ENCODE measurements at regions of chr13 and their contacts with region 1.

Region 1: DNA sequence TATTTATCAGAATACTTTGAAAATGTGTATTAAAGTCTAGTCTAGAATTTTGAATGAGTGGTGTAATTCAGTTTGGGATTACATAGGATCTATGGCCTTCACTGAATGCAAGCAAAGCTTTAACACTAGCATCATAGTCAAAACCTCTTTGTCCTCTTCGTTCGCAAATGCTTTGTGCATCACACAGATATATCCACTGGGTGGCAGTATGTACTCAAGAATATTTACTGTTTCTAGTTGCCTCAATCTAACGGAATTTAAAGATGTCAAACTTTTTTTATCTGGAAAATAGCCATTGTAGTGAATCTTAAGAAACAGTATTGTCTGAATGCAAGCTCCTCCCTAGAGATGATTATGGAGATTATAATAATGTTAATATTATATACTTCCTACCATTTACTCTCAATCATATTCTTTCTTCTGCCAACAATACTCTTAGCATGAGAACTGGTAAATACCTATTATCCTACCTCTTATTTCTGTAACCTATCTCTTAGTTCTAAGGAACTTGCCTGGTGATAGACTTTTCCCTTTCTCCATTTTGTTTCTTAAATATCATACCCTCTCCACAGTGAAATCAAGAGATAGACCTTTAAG is 25.8 kb downstream of the LACC1 start:
- DNase-seq: peak; percentile 67
- H3K4me3 Mint-ChIP-seq: no peak overlapping the region
- H3K27ac Mint-ChIP-seq: no peak overlapping the region
- H3K4me1 Mint-ChIP-seq: peaks cover 8% of the 10 kb centered on the region
- H3K27me3 Mint-ChIP-seq: no peaks in the 10 kb centered on the region
- CTCF ChIP-seq: peak; percentile 70

Region 2: DNA sequence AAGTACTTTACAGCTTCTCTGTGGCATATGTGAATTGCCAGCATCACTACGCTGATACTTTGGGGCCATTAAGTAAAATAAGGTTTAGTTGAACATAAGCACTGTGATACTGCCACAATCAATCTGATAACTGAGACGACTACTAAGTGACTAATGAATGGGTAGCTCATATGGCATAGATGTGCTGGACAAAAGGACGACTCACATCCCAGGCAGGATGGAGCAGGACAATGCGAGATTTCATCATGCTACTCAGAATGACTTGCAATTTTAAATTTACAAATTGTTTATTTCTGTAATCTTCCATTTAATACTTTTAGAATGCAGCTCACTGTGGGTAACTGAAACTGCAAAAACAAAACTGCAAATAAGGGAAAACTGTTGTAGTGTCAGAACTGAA is 39.6 kb before region 1 on chr13:
- CTCF ChIA-PET with region 1: no interaction called
- POLR2A ChIA-PET with region 1: no interaction called
- intact Hi-C with region 1: no loop called
- DNase-seq: peak; percentile 34
- H3K4me3 Mint-ChIP-seq: no peak overlapping the region
- H3K27ac Mint-ChIP-seq: no peak overlapping the region
- H3K4me1 Mint-ChIP-seq: no peaks in the 10 kb centered on the region
- H3K27me3 Mint-ChIP-seq: no peaks in the 10 kb centered on the region
- CTCF ChIP-seq: no peak

Region 3: GRCh38 chr13:43924549-43925245 is 19.2 kb after region 1 on chr13:
- CTCF ChIA-PET with region 1: interaction called, 16 read pairs
- POLR2A ChIA-PET with region 1: interaction called, 3 read pairs
- intact Hi-C with region 1: no loop called
- DNase-seq: no peak
- H3K4me3 Mint-ChIP-seq: no peak overlapping the region
- H3K27ac Mint-ChIP-seq: no peak overlapping the region
- H3K4me1 Mint-ChIP-seq: no peaks in the 10 kb centered on the region
- H3K27me3 Mint-ChIP-seq: no peaks in the 10 kb centered on the region
- CTCF ChIP-seq: no peak

Region 4: GRCh38 chr13:44050450-44051063 is 145.0 kb after region 1 on chr13:
- CTCF ChIA-PET with region 1: interaction called, 111 read pairs
- POLR2A ChIA-PET with region 1: interaction called, 4 read pairs
- intact Hi-C with region 1: loop called (anchors 1 kb)
- DNase-seq: peak; percentile 54
- H3K4me3 Mint-ChIP-seq: no peak overlapping the region
- H3K27ac Mint-ChIP-seq: no peak overlapping the region
- H3K4me1 Mint-ChIP-seq: peaks cover 5% of the 10 kb centered on the region
- H3K27me3 Mint-ChIP-seq: peaks cover 26% of the 10 kb centered on the region
- CTCF ChIP-seq: peak; percentile 62

Region 5: GRCh38 chr13:44243198-44243857 is 337.8 kb after region 1 on chr13:
- CTCF ChIA-PET with region 1: interaction called, 9 read pairs
- POLR2A ChIA-PET with region 1: no interaction called
- intact Hi-C with region 1: loop called (anchors 5 kb)
- DNase-seq: peak; percentile 97
- H3K4me3 Mint-ChIP-seq: no peak overlapping the region
- H3K27ac Mint-ChIP-seq: peak overlapping the region; percentile 81
- H3K4me1 Mint-ChIP-seq: peaks cover 29% of the 10 kb centered on the region
- H3K27me3 Mint-ChIP-seq: no peaks in the 10 kb centered on the region
- CTCF ChIP-seq: peak; percentile 71

Region 6: GRCh38 chr13:44465318-44465717 is 559.8 kb after region 1 on chr13:
- CTCF ChIA-PET with region 1: interaction called, 63 read pairs
- POLR2A ChIA-PET with region 1: interaction called, 7 read pairs
- intact Hi-C with region 1: no loop called
- DNase-seq: no peak
- H3K4me3 Mint-ChIP-seq: no peak overlapping the region
- H3K27ac Mint-ChIP-seq: no peak overlapping the region
- H3K4me1 Mint-ChIP-seq: peaks cover 6% of the 10 kb centered on the region
- H3K27me3 Mint-ChIP-seq: no peaks in the 10 kb centered on the region
- CTCF ChIP-seq: no peak

Region 7: GRCh38 chr13:44917589-44918325 is 1012.2 kb after region 1 on chr13:
- CTCF ChIA-PET with region 1: interaction called, 3 read pairs
- POLR2A ChIA-PET with region 1: no interaction called
- intact Hi-C with region 1: loop called (anchors 5 kb)
- DNase-seq: peak; percentile 96
- H3K4me3 Mint-ChIP-seq: no peak overlapping the region
- H3K27ac Mint-ChIP-seq: no peak overlapping the region
- H3K4me1 Mint-ChIP-seq: peaks cover 18% of the 10 kb centered on the region
- H3K27me3 Mint-ChIP-seq: no peaks in the 10 kb centered on the region
- CTCF ChIP-seq: peak; percentile 54